Caco-2 (cell line): ENCODE measurements at regions of chr11 and their contacts with region 1.

Region 1: GRCh38 chr11:63813035-63813562 is at the start of gene SPINDOC:
- DNase-seq: peak; percentile 77 to 90
- H3K4me3 ChIP-seq: peak within 1 kb of the TSS; percentile 89
- H3K4me3 Mint-ChIP-seq: peak within 1 kb of the TSS; percentile 84
- H3K27ac Mint-ChIP-seq: peak within 1 kb of the TSS; percentile 72
- H3K4me1 ChIP-seq: peaks cover 7% of the 10 kb centered on the region; the same call in 1 of the 2 replicates
- H3K4me1 Mint-ChIP-seq: peaks cover 30% of the 10 kb centered on the region
- H3K27me3 ChIP-seq: no peaks in the 10 kb centered on the region
- H3K27me3 Mint-ChIP-seq: no peaks in the 10 kb centered on the region
- CTCF ChIP-seq: no peak
- total RNA-seq, gene SPINDOC: 71.2 and 72.1 TPM in 2 replicates

Region 2: GRCh38 chr11:63862923-63863322 is 49.8 kb after region 1 on chr11:
- CTCF ChIA-PET with region 1: no interaction called
- POLR2A ChIA-PET with region 1: interaction called, 15 read pairs
- intact Hi-C with region 1: no loop called
- DNase-seq: no peak
- H3K4me3 ChIP-seq: no peak overlapping the region
- H3K4me3 Mint-ChIP-seq: no peak overlapping the region
- H3K27ac Mint-ChIP-seq: peak overlapping the region; percentile 29
- H3K4me1 ChIP-seq: peaks cover 12% of the 10 kb centered on the region
- H3K4me1 Mint-ChIP-seq: peaks cover 22% of the 10 kb centered on the region
- H3K27me3 ChIP-seq: no peaks in the 10 kb centered on the region
- H3K27me3 Mint-ChIP-seq: no peaks in the 10 kb centered on the region
- CTCF ChIP-seq: no peak